ENCODE measurements at regions of chr17 and their contacts with region 1.

Region 1: DNA sequence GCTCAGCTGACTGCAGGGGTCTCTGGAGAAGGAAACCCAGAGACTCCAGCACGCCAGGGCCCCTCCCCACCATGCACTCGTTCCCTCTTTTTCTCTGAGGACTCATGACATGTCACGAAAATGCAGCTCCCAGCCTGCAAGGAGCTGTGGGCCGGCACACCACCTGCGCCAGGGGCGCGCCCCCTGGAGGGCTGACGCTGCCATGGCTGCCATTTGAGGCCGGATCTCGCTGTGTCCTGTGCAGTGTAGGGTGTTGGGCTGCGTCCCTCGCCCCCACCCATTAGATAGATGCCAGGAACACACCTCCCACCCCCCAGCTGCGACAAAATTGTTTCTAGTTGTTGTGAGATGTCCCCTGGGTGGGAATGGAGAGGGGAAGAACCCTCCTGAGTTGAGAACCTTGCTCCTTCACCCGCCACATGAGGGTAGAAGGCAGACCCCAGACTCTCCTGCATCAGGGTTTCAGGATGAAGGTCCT is 8.2 kb downstream of the SYNGR2 start:
- H3K4me3 Mint-ChIP-seq: no peak overlapping the region
- H3K27ac Mint-ChIP-seq: peak overlapping the region; percentile 97
- H3K4me1 Mint-ChIP-seq: peaks cover 82% of the 10 kb centered on the region
- H3K27me3 Mint-ChIP-seq: no peaks in the 10 kb centered on the region

Region 2: GRCh38 chr17:78112518-78113226 is 63.9 kb before region 1 on chr17:
- intact Hi-C with region 1: loop called (anchors 5 kb)
- H3K4me3 Mint-ChIP-seq: no peak overlapping the region
- H3K27ac Mint-ChIP-seq: peak overlapping the region; percentile 3
- H3K4me1 Mint-ChIP-seq: peaks cover 38% of the 10 kb centered on the region
- H3K27me3 Mint-ChIP-seq: no peaks in the 10 kb centered on the region

Region 3: DNA sequence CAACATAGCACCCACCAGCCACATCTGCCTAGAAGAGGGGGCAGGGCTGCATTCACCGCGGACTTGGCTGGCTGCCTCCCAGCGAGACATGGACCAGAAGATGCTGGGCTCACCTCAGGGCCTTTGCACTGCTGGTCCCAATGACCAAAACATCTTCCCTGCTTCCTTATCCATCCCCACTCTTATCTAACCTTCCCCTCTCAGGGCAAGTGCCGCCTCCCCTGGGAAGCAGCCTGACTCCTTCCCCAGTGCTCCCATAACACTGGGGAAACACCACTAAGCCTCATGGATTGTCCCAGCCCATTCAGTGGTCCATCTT is 53.7 kb before region 1 on chr17:
- intact Hi-C with region 1: no loop called
- H3K4me3 Mint-ChIP-seq: no peak overlapping the region
- H3K27ac Mint-ChIP-seq: no peak overlapping the region
- H3K4me1 Mint-ChIP-seq: peaks cover 80% of the 10 kb centered on the region
- H3K27me3 Mint-ChIP-seq: no peaks in the 10 kb centered on the region

Region 4: DNA sequence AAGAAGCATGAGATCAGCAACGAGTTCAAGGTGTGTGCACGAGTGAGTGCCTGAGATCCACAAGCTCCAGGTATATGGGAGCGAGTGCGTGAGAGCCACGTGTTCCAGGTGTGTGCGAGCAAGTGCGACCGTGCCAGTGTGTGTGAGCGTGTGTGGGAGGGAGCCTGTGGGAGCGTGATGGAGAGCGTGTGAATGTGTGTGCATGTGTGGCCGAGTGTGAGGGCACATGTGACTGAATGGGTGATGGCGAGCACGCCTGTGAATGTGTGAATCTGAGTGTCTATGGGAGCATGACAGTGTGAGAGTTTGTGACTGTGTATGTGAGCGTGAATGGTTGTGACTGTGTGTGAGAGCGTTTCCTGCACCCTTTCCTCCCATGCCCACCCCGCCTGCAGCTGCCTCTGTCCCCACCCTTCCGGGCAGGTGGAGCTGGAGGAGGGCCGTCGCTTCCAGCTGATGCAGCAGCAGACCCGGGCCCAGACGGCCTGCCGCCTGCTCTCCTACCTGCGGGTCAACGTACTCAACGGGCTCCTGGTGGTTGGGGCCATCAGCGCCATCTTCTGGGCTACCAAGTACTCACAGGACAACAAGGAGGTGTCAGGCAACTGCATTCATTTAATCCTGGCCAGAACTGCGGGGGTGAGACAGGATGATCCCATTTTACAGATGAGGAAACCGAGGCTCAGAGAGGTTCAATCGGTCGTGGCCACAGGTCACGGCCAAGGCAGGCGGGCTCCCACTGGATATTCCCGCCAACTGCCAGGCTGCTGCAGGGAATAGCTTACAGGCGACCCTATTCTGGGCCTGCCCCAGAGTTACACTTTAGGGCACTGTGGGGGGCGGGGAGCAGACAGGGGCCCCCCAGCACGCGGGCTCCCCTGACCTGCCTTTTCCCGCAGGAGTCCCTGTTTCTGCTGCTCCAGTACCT is 42.4 kb before region 1 on chr17:
- intact Hi-C with region 1: loop called (anchors 5 kb)
- H3K4me3 Mint-ChIP-seq: no peak overlapping the region
- H3K27ac Mint-ChIP-seq: peak overlapping the region; percentile 80
- H3K4me1 Mint-ChIP-seq: peaks cover 87% of the 10 kb centered on the region
- H3K27me3 Mint-ChIP-seq: peaks cover 3% of the 10 kb centered on the region

Region 5: DNA sequence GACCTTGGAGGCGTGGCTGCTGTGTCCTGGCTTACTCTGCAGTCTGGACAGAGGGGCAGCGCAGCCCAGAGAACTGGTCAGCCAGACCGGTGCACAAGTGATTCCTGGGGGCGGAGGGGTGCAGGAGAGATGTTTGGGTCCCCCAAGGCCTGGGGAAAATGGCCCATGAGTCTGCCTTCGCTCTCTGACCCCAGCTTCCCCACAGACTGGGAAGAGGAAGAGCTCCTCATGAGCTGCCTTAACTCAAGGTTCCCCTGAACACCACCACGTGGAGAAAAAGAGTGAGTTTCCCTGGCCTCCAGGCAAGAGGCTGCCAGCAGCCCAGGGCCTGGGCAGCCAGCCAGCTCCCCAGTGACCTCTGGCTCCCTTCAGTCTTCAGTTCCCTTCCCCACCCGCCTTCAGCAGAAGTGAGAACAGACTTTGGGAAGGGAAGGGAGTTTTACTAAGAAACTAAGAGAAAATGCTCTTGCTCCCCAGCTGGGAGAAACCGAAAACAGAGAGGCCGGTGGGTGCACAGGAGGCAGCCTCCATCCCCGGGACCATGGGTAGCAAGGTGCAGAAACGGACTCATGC is 32.4 kb before region 1 on chr17:
- intact Hi-C with region 1: loop called (anchors 1 kb)
- H3K4me3 Mint-ChIP-seq: peak overlapping the region; percentile 65
- H3K27ac Mint-ChIP-seq: peak overlapping the region; percentile 89
- H3K4me1 Mint-ChIP-seq: peaks cover 91% of the 10 kb centered on the region
- H3K27me3 Mint-ChIP-seq: peaks cover 4% of the 10 kb centered on the region

Region 6: DNA sequence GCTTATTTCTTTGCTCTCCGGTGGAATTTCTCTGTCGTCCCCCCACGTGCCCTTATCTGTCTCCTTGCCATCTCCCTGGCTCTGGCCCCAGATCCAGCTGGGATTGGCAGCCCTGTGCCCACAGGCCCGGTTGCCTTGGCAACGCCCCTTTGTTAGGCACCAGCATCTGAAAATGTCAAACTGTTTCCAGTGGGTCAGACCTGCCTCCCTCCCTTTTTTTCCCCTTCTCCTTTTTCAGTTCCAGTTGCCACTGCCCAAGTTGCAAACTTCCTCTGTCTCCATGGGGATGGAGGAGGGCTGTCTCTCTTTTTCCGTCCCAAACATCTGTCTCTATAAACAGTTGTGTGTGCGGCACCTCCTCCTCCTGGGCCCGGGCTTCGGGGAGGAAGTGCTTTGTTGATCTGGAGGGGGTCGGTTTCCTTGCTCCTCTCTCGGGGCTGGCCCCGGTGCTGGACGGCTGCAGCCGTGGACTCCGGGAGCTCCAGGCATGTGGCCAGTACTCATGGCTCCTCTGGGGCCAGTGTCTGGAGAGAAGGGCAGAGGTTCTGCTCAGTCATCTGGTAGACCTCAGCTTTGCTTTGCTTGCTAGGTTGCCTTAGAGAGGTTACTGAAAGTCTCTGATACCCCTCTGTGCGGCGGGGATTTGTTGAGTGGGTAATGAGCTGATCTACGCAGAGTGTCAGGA is 147.9 kb after region 1 on chr17:
- intact Hi-C with region 1: no loop called
- H3K4me3 Mint-ChIP-seq: peak overlapping the region; percentile 69
- H3K27ac Mint-ChIP-seq: peak overlapping the region; percentile 92
- H3K4me1 Mint-ChIP-seq: peaks cover 59% of the 10 kb centered on the region
- H3K27me3 Mint-ChIP-seq: no peaks in the 10 kb centered on the region

Region 7: DNA sequence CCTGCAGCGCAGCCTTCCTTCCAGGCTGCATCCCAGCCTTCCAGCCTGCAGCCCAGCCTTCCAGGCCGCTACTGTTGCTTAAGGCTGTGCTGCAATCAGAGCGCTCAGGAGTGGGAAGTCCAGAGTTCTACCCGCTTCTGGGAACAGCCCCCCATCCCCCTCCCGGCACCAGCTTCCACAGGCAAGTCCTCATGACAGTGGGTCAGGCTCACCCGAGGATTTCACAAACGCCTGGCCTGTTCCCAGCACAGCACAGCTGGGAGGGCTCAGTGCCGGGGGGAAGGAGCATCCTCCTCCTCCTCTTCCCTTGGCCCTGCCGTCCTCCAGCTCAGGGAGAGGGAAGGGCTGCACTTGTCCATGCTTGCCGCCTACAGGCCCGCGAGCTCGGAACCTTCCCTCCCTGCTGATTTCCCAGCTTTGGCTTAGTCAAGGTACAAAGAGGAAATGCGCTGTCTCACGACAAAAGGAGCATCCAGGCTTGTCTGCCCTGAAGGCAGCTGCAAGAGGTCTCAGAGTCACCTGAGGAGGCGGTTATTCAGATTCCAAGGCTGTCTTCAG is 174.9 kb after region 1 on chr17:
- intact Hi-C with region 1: no loop called
- H3K4me3 Mint-ChIP-seq: no peak overlapping the region
- H3K27ac Mint-ChIP-seq: peak overlapping the region; percentile 61
- H3K4me1 Mint-ChIP-seq: peaks cover 80% of the 10 kb centered on the region
- H3K27me3 Mint-ChIP-seq: peaks cover 13% of the 10 kb centered on the region

Measured in dendritic cell treated with granulocyte-macrophage colony-stimulating factor and Interleukin-4, amounts not matched to agents 40 ng/mL and 50 ng/mL, for 4 days (primary cell).